Vagina (tissue), 2 donors: ENCODE measurements at regions of chr7 and their contacts with region 1.

Region 1: GRCh38 chr7:74094224-74095101 is 10.9 kb downstream of the LIMK1 start:
- DNase-seq: no peak
- H3K4me3 ChIP-seq: peak overlapping the region; percentile 40 to 45
- H3K27ac ChIP-seq: peak overlapping the region; percentile 88
- H3K4me1 ChIP-seq: peaks cover 59% of the 10 kb centered on the region
- H3K27me3 ChIP-seq: no peaks in the 10 kb centered on the region
- CTCF ChIP-seq: no peak
- POLR2A ChIP-seq: peak in 1 of 2 donors; percentile 21

Region 2: GRCh38 chr7:74070619-74070921 is 23.9 kb before region 1 on chr7:
- intact Hi-C with region 1: no loop called
- DNase-seq: no peak
- H3K4me3 ChIP-seq: no peak overlapping the region
- H3K27ac ChIP-seq: peak overlapping the region; percentile 33
- H3K4me1 ChIP-seq: no peaks in the 10 kb centered on the region
- H3K27me3 ChIP-seq: no peaks in the 10 kb centered on the region
- CTCF ChIP-seq: no peak
- POLR2A ChIP-seq: no peak

Region 3: GRCh38 chr7:74121401-74122249 is 27.2 kb after region 1 on chr7:
- intact Hi-C with region 1: loop called (anchors 2 kb)
- DNase-seq: no peak
- H3K4me3 ChIP-seq: no peak overlapping the region
- H3K27ac ChIP-seq: no peak overlapping the region
- H3K4me1 ChIP-seq: no peaks in the 10 kb centered on the region
- H3K27me3 ChIP-seq: no peaks in the 10 kb centered on the region
- CTCF ChIP-seq: no peak
- POLR2A ChIP-seq: no peak

Region 4: GRCh38 chr7:74153758-74154157 is 59.3 kb after region 1 on chr7:
- intact Hi-C with region 1: no loop called
- DNase-seq: no peak
- H3K4me3 ChIP-seq: no peak overlapping the region
- H3K27ac ChIP-seq: no peak overlapping the region
- H3K4me1 ChIP-seq: no peaks in the 10 kb centered on the region
- H3K27me3 ChIP-seq: no peaks in the 10 kb centered on the region
- CTCF ChIP-seq: no peak
- POLR2A ChIP-seq: no peak

Region 5: GRCh38 chr7:74294191-74294998 is 199.9 kb after region 1 on chr7:
- intact Hi-C with region 1: no loop called
- DNase-seq: no peak
- H3K4me3 ChIP-seq: no peak overlapping the region
- H3K27ac ChIP-seq: peak overlapping the region; percentile 3
- H3K4me1 ChIP-seq: peaks cover 55% of the 10 kb centered on the region
- H3K27me3 ChIP-seq: no peaks in the 10 kb centered on the region
- CTCF ChIP-seq: no peak
- POLR2A ChIP-seq: no peak